ENCODE measurements at regions of chr4 and their contacts with region 1.

Region 1: GRCh38 chr4:67545199-67546003 is at the start of gene CENPC:
- DNase-seq: peak; percentile 97
- H3K4me3 ChIP-seq: peak within 1 kb of the TSS; percentile 59
- H3K27ac ChIP-seq: peak within 1 kb of the TSS; percentile 89
- H3K4me1 ChIP-seq: no peaks in the 10 kb centered on the region
- H3K27me3 ChIP-seq: no peaks in the 10 kb centered on the region
- CTCF ChIP-seq: no peak
- total RNA-seq, gene CENPC: 12.7 to 17.0 TPM

Region 2: GRCh38 chr4:67593741-67594175 is 48.4 kb after region 1 on chr4:
- intact Hi-C with region 1: no loop called
- DNase-seq: no peak
- H3K4me3 ChIP-seq: no peak overlapping the region
- H3K27ac ChIP-seq: no peak overlapping the region
- H3K4me1 ChIP-seq: no peaks in the 10 kb centered on the region
- H3K27me3 ChIP-seq: no peaks in the 10 kb centered on the region
- CTCF ChIP-seq: no peak

Region 3: GRCh38 chr4:67699628-67700027 is 154.2 kb after region 1 on chr4:
- intact Hi-C with region 1: loop called (anchors 10 kb)
- DNase-seq: no peak
- H3K4me3 ChIP-seq: no peak overlapping the region
- H3K27ac ChIP-seq: no peak overlapping the region
- H3K4me1 ChIP-seq: no peaks in the 10 kb centered on the region
- H3K27me3 ChIP-seq: no peaks in the 10 kb centered on the region
- CTCF ChIP-seq: no peak

Region 4: GRCh38 chr4:67909905-67910584 is 364.6 kb after region 1 on chr4:
- intact Hi-C with region 1: loop called (anchors 10 kb)
- DNase-seq: no peak
- H3K4me3 ChIP-seq: no peak overlapping the region
- H3K27ac ChIP-seq: no peak overlapping the region
- H3K4me1 ChIP-seq: no peaks in the 10 kb centered on the region
- H3K27me3 ChIP-seq: no peaks in the 10 kb centered on the region
- CTCF ChIP-seq: peak; percentile 72

Region 5: DNA sequence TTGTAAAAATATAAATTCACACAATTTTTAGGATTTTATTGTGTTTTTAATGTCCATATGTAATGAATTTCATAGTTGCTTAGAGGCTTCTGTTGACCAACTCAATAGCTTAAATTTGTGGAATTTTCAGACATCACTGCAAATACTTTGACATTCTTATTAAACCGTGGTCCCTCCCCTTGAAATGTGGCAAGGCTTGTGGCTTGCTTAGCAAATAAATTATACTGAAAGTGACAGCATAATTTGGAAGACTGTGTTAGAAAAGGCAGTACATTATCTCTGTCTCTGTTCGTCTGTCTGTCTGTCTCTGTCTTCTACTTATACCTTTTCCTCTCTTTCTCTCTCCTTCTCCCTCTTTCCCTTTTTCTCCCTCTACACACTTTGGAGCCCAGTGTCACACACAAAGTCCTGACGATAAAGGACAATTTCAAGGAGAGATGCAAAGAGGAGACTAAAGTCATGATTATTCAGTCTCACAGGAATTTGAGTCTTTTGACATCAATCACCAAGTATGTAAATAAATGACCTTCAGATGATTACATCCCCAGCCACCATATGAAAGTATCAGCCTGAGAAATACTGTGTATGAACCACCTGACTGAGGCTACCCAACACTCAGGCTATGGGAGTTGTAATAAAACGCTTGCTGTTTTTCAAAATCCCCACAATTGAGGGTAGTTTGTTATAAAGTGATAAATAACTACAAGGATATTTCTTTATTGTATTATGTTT is 1529.8 kb after region 1 on chr4:
- intact Hi-C with region 1: no loop called
- DNase-seq: no peak
- H3K4me3 ChIP-seq: no peak overlapping the region
- H3K27ac ChIP-seq: no peak overlapping the region
- H3K4me1 ChIP-seq: no peaks in the 10 kb centered on the region
- H3K27me3 ChIP-seq: no peaks in the 10 kb centered on the region
- CTCF ChIP-seq: no peak

Measured in colonic mucosa (tissue), 4 donors.